ENCODE measurements at regions of chr4 and their contacts with region 1.

Region 1: GRCh38 chr4:139229534-139230039 is 50.4 kb downstream of the MGARP start:
- DNase-seq: no peak
- H3K4me3 Mint-ChIP-seq: no peak overlapping the region
- H3K27ac Mint-ChIP-seq: no peak overlapping the region
- H3K4me1 Mint-ChIP-seq: no peaks in the 10 kb centered on the region
- H3K27me3 Mint-ChIP-seq: no peaks in the 10 kb centered on the region

Region 2: DNA sequence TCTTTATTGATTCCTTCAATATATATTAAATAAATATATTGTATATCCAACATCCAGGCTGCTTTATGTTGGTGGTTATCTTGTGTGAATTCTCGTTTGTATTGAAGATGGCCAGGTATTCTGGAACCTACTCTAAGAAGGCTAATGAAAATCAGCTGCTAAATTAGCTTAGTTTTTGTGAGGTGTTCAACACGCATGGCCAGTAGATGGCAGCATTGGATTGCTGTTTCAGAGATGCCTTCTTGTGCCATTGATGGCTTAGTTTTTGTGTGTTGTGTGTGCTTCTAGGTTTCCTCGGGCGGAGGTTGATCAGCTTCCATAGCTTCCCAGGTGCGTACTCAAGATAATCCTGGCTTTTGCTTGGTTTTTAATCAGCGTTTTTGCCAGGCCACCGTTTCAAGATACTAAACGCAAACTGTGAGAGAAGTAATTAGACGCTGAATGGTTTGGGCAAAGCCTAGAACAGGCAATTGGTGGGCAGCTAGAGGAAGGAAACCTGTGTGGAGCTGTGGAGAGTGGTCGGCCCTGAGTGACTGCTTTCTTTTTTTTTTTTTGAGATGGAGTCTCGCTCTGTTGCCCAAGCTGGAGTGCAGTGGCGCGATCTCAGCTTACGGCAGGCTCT is 198.9 kb before region 1 on chr4:
- intact Hi-C with region 1: loop called (anchors 2 kb)
- DNase-seq: peak; percentile 55
- H3K4me3 Mint-ChIP-seq: no peak overlapping the region
- H3K27ac Mint-ChIP-seq: no peak overlapping the region
- H3K4me1 Mint-ChIP-seq: peaks cover 15% of the 10 kb centered on the region
- H3K27me3 Mint-ChIP-seq: no peaks in the 10 kb centered on the region

Region 3: GRCh38 chr4:139266583-139267257 is 37.1 kb after region 1 on chr4:
- intact Hi-C with region 1: loop called (anchors 5 kb)
- DNase-seq: peak; percentile 70
- H3K4me3 Mint-ChIP-seq: peak overlapping the region; percentile 50
- H3K27ac Mint-ChIP-seq: peak overlapping the region; percentile 10
- H3K4me1 Mint-ChIP-seq: peaks cover 21% of the 10 kb centered on the region
- H3K27me3 Mint-ChIP-seq: peaks cover 23% of the 10 kb centered on the region

Region 4: GRCh38 chr4:139301113-139301820 is 71.7 kb after region 1 on chr4 and contains the start of gene NAA15:
- intact Hi-C with region 1: loop called (anchors 1 kb)
- DNase-seq: peak; percentile 97
- H3K4me3 Mint-ChIP-seq: peak within 1 kb of the TSS; percentile 95
- H3K27ac Mint-ChIP-seq: peak within 1 kb of the TSS; percentile 97
- H3K4me1 Mint-ChIP-seq: peaks cover 69% of the 10 kb centered on the region
- H3K27me3 Mint-ChIP-seq: no peaks in the 10 kb centered on the region
- total RNA-seq, gene NAA15: 104 and 110 TPM in 2 replicates

Region 5: DNA sequence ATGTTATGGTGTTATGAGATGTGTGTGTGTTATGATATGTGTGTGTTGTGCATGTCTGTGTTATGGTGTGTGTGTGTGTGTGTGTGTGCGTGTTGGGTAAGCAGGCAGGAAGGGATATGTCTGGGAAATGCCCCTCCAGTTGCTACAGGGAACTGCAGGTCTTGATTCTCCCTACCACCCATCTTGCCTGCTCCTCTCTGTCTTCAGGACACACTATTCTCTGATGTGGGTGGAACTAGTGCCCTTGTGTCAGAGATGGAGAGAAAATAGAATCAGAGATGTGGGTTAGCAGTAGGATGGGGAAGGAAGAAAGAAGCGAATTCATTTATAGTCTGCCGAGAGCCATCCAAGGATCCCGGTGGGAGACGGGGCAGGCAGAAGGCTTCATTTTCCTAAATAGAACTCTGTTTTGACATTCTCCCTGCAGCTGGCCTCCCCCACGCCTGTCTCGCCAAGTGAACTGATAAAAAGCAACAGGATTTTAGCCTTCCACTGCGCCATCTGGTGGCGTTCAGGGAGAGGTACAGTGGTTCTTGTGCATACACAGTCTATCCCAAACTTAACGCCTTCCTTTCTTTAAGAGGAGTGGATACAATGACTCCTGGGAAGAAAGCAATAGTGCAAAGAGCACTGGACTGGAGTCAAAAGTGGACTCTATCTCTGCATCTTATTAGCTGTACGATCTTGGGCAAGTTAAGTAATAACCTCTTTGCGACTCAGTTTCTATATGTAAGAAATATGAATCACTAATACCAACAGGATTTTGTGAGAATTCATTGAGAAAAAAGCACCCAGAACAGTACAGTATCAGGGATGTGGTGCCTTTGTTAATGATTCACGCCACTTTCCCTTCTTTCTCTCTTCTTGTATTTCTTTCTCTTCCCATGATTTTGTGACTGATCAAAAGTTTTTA is 422.0 kb after region 1 on chr4:
- intact Hi-C with region 1: loop called (anchors 1 kb)
- DNase-seq: peak; percentile 29
- H3K4me3 Mint-ChIP-seq: no peak overlapping the region
- H3K27ac Mint-ChIP-seq: no peak overlapping the region
- H3K4me1 Mint-ChIP-seq: peaks cover 20% of the 10 kb centered on the region
- H3K27me3 Mint-ChIP-seq: no peaks in the 10 kb centered on the region